CD8-positive, alpha-beta T cell (primary cell): ENCODE measurements at regions of chr1 and their contacts with region 1.

Region 1: GRCh38 chr1:28248283-28249012 is 10.9 kb upstream of the SESN2 start:
- DNase-seq: peak; percentile 72 to 89 (median 84)
- ATAC-seq: peak; percentile 18
- H3K4me3 ChIP-seq: peak overlapping the region in 1 of 2 experiments; percentile 28
- H3K4me3 Mint-ChIP-seq: peak overlapping the region; percentile 61
- H3K27ac ChIP-seq: peak overlapping the region; percentile 65 to 94
- H3K27ac Mint-ChIP-seq: peak overlapping the region; percentile 96
- H3K4me1 ChIP-seq: peaks cover 40% of the 10 kb centered on the region
- H3K4me1 Mint-ChIP-seq: peaks cover 44% of the 10 kb centered on the region
- H3K27me3 ChIP-seq: no peaks in the 10 kb centered on the region
- H3K27me3 Mint-ChIP-seq: no peaks in the 10 kb centered on the region
- CTCF ChIP-seq: peak; percentile 90

Region 2: GRCh38 chr1:27934818-27935549 is 313.5 kb before region 1 on chr1 and contains the start of gene SMPDL3B:
- CTCF ChIA-PET with region 1: no interaction called
- POLR2A ChIA-PET with region 1: no interaction called
- intact Hi-C with region 1: no loop called
- DNase-seq: no peak
- ATAC-seq: no peak
- H3K4me3 ChIP-seq: peak within 1 kb of the TSS; percentile 1 to 11
- H3K4me3 Mint-ChIP-seq: peak within 1 kb of the TSS; percentile 42
- H3K27ac ChIP-seq: no peak within 1 kb of the TSS
- H3K27ac Mint-ChIP-seq: no peak within 1 kb of the TSS
- H3K4me1 ChIP-seq: peaks cover 6% of the 10 kb centered on the region
- H3K4me1 Mint-ChIP-seq: peaks cover 15% of the 10 kb centered on the region
- H3K27me3 ChIP-seq: peaks cover 0 to 10% of the 10 kb centered on the region in 2 experiments
- H3K27me3 Mint-ChIP-seq: peaks cover 20% of the 10 kb centered on the region
- CTCF ChIP-seq: no peak
- total RNA-seq, gene SMPDL3B: not detected

Region 3: DNA sequence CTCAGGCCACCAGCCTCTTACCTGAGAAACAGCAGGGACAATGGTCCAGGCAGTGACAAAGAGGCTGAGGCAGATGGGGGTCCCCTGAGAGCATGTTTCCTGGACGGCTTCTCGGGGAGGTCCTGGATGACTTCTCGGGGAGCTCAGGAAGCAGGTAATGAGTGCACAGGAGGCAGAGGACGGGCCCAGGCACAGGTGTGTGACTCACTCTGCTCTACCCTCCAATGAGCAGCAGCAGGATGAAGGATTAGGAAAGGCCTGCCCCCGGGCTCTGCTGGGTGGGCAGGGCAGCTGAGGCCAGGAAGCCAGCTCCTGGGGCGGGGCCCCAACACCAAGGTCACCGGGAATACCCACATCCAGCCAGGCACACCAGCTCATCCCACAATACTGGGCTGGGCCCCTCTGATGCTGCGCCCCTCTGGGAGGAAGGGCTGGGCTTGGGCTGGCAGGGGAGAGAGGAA is 54.7 kb before region 1 on chr1:
- CTCF ChIA-PET with region 1: no interaction called
- POLR2A ChIA-PET with region 1: no interaction called
- intact Hi-C with region 1: no loop called
- DNase-seq: no peak
- ATAC-seq: no peak
- H3K4me3 ChIP-seq: no peak overlapping the region
- H3K4me3 Mint-ChIP-seq: no peak overlapping the region
- H3K27ac ChIP-seq: no peak overlapping the region
- H3K27ac Mint-ChIP-seq: no peak overlapping the region
- H3K4me1 ChIP-seq: peaks cover 14% of the 10 kb centered on the region
- H3K4me1 Mint-ChIP-seq: peaks cover 17% of the 10 kb centered on the region
- H3K27me3 ChIP-seq: no peaks in the 10 kb centered on the region
- H3K27me3 Mint-ChIP-seq: no peaks in the 10 kb centered on the region
- CTCF ChIP-seq: no peak

Region 4: GRCh38 chr1:28235755-28236655 is 12.4 kb before region 1 on chr1 and contains the start of gene ATP5IF1:
- CTCF ChIA-PET with region 1: interaction called, 20 read pairs
- POLR2A ChIA-PET with region 1: interaction called, 63 read pairs
- intact Hi-C with region 1: loop called (anchors 1 kb)
- DNase-seq: peak; percentile 90 to 98 (median 94)
- ATAC-seq: peak; percentile 95
- H3K4me3 ChIP-seq: peak within 1 kb of the TSS; percentile 80 to 96
- H3K4me3 Mint-ChIP-seq: no peak within 1 kb of the TSS
- H3K27ac ChIP-seq: peak within 1 kb of the TSS; percentile 84 to 96
- H3K27ac Mint-ChIP-seq: no peak within 1 kb of the TSS
- H3K4me1 ChIP-seq: peaks cover 41% of the 10 kb centered on the region
- H3K4me1 Mint-ChIP-seq: peaks cover 21% of the 10 kb centered on the region
- H3K27me3 ChIP-seq: no peaks in the 10 kb centered on the region
- H3K27me3 Mint-ChIP-seq: no peaks in the 10 kb centered on the region
- CTCF ChIP-seq: no peak
- total RNA-seq, gene ATP5IF1: 66.1 to 69.3 TPM

Region 5: DNA sequence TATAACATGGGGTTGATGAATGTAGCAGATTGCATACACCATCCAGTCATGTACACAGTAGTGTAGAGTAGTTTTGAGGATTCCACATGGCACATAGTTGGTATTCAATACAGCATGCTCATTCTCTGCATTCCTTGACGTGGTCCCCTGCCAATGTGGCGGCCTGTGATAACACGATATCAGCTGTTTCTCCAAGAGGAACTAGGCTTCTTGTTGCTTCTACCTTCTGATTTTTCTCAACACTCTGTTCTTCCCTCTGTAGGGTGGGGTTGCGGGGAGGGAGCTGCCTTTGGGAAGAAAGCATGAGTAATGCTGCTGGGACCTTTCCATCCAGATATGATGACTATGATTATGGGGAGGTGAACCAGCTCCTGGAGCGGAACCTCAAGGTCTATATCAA is 30.3 kb after region 1 on chr1:
- CTCF ChIA-PET with region 1: interaction called, 3 read pairs
- POLR2A ChIA-PET with region 1: no interaction called
- intact Hi-C with region 1: loop called in 1 of 2 experiments (anchors 2 kb)
- DNase-seq: no peak
- ATAC-seq: no peak
- H3K4me3 ChIP-seq: no peak overlapping the region
- H3K4me3 Mint-ChIP-seq: no peak overlapping the region
- H3K27ac ChIP-seq: no peak overlapping the region
- H3K27ac Mint-ChIP-seq: no peak overlapping the region
- H3K4me1 ChIP-seq: no peaks in the 10 kb centered on the region
- H3K4me1 Mint-ChIP-seq: peaks cover 2% of the 10 kb centered on the region
- H3K27me3 ChIP-seq: no peaks in the 10 kb centered on the region
- H3K27me3 Mint-ChIP-seq: no peaks in the 10 kb centered on the region
- CTCF ChIP-seq: no peak

Region 6: DNA sequence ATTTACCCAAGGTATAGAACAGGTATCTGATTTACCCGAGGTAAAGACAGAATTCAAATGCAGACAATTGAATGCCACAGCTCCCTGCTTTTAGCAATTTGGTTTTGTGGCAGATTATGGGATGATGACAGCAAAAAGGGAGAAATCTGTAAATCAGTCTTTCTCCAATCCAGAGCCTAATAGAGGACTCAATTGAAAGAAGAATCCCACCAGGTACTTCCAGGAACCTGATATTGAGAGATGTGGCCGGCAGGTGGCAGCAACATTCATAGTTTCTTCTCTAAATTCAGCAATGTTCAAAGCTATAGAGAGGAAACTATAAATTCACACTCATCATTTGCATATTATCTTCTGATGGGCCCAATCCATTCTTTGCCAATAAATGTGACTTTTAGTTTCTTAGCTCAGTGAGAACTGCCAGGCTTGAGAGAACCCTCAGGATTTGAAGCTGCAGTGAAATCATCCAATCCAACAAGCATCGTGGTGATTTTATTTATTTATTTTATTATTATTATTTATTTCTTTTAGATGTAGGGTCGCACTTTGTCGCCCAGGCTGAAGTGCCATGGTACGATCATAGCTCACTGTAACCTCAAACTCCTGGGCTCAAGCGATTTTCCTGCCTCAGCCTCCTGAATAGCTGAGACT is 111.3 kb after region 1 on chr1:
- CTCF ChIA-PET with region 1: interaction called, 43 read pairs
- POLR2A ChIA-PET with region 1: interaction called, 5 read pairs
- intact Hi-C with region 1: loop called (anchors 1 kb)
- DNase-seq: peak; percentile 50 to 83 (median 75)
- ATAC-seq: peak; percentile 75
- H3K4me3 ChIP-seq: no peak overlapping the region
- H3K4me3 Mint-ChIP-seq: no peak overlapping the region
- H3K27ac ChIP-seq: no peak overlapping the region
- H3K27ac Mint-ChIP-seq: no peak overlapping the region
- H3K4me1 ChIP-seq: no peaks in the 10 kb centered on the region
- H3K4me1 Mint-ChIP-seq: peaks cover 2% of the 10 kb centered on the region
- H3K27me3 ChIP-seq: no peaks in the 10 kb centered on the region
- H3K27me3 Mint-ChIP-seq: no peaks in the 10 kb centered on the region
- CTCF ChIP-seq: peak; percentile 79

Region 7: GRCh38 chr1:28552758-28553663 is 304.6 kb after region 1 on chr1 and contains the start of gene TRNAU1AP:
- CTCF ChIA-PET with region 1: no interaction called
- POLR2A ChIA-PET with region 1: no interaction called
- intact Hi-C with region 1: loop called in 1 of 2 experiments (anchors 1 kb)
- DNase-seq: peak; percentile 95 to 98 (median 97)
- ATAC-seq: peak; percentile 96
- H3K4me3 ChIP-seq: peak within 1 kb of the TSS; percentile 91 to 98
- H3K4me3 Mint-ChIP-seq: peak within 1 kb of the TSS; percentile 99
- H3K27ac ChIP-seq: peak within 1 kb of the TSS; percentile 77 to 86
- H3K27ac Mint-ChIP-seq: peak within 1 kb of the TSS; percentile 99
- H3K4me1 ChIP-seq: peaks cover 15% of the 10 kb centered on the region
- H3K4me1 Mint-ChIP-seq: peaks cover 24% of the 10 kb centered on the region
- H3K27me3 ChIP-seq: no peaks in the 10 kb centered on the region
- H3K27me3 Mint-ChIP-seq: no peaks in the 10 kb centered on the region
- CTCF ChIP-seq: no peak
- total RNA-seq, gene TRNAU1AP: 20.5 to 25.7 TPM

Region 8: GRCh38 chr1:28668191-28668955 is 419.9 kb after region 1 on chr1 and contains the start of gene GMEB1:
- CTCF ChIA-PET with region 1: no interaction called
- POLR2A ChIA-PET with region 1: no interaction called
- intact Hi-C with region 1: loop called (anchors 5 kb)
- DNase-seq: peak; percentile 66 to 91 (median 82)
- ATAC-seq: peak; percentile 61
- H3K4me3 ChIP-seq: peak within 1 kb of the TSS; percentile 83 to 98
- H3K4me3 Mint-ChIP-seq: peak within 1 kb of the TSS; percentile 92
- H3K27ac ChIP-seq: peak within 1 kb of the TSS; percentile 81 to 98
- H3K27ac Mint-ChIP-seq: peak within 1 kb of the TSS; percentile 97
- H3K4me1 ChIP-seq: peaks cover 9% of the 10 kb centered on the region
- H3K4me1 Mint-ChIP-seq: peaks cover 22% of the 10 kb centered on the region
- H3K27me3 ChIP-seq: no peaks in the 10 kb centered on the region
- H3K27me3 Mint-ChIP-seq: no peaks in the 10 kb centered on the region
- CTCF ChIP-seq: no peak
- total RNA-seq, gene GMEB1: 12.9 to 13.6 TPM